ENCODE measurements at regions of chr1 and their contacts with region 1.

Region 1: DNA sequence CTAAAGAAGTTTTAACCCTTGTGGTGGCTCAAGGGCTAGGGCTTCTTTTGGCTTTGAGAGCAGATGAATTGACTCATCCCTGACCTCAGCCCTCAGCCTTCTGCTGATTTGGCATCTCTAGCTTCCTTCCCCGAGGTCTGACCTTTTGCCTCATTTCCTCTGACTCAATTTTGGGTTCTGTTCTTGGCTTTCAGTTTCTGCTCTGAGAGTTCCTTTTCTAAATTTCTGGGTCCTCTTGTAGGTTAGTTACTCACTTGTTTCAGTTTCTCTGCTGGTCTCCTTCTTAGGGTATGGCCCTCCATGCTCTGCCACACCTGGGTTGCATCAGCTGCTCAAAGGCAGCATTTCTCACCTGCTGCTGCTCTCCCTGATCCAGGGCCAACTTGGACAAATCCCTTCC is 19.4 kb downstream of the PDE4B start:
- DNase-seq: no peak
- H3K4me3 ChIP-seq: no peak overlapping the region
- H3K27ac ChIP-seq: peak overlapping the region in 2 of 4 donors; percentile 35 to 39
- H3K4me1 ChIP-seq: peaks cover 0 to 6% (median 0%) of the 10 kb centered on the region in 3 donors
- H3K27me3 ChIP-seq: no peaks in the 10 kb centered on the region
- CTCF ChIP-seq: no peak
- POLR2A ChIP-seq: no peak

Region 2: GRCh38 chr1:65493802-65494201 is 318.3 kb before region 1 on chr1:
- intact Hi-C with region 1: no loop called
- DNase-seq: no peak
- H3K4me3 ChIP-seq: no peak overlapping the region
- H3K27ac ChIP-seq: peak overlapping the region in 1 of 4 donors; percentile 55
- H3K4me1 ChIP-seq: no peaks in the 10 kb centered on the region
- H3K27me3 ChIP-seq: no peaks in the 10 kb centered on the region
- CTCF ChIP-seq: no peak
- POLR2A ChIP-seq: no peak

Region 3: DNA sequence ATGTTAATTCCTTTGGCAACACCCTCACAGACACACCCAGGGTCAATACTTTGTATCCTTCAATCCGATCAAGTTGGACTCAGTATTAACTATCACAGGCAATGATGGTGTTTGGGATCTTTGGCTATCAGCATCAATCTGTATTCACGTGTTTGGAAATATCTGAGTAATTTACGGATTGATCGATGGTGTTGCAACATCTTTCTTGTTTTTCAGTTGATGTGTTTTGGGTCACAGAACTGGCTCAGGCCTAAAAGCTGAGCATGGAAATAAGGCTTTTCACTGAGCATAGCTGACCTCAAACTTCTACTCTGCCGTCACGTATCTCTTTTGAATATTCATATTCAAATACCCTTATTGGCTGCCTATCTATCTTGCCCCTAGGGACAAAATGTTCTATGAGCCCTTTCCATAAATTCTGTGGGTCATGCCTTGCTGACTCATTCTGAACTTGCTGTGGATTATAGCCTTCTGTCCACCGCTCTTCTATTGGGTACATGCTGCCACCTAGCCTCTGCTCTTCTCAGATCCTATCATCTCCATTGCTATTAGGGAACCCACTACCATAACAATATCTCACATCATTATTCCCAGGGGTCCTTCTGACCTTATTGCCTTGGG is 136.7 kb after region 1 on chr1:
- intact Hi-C with region 1: no loop called
- DNase-seq: no peak
- H3K4me3 ChIP-seq: no peak overlapping the region
- H3K27ac ChIP-seq: peak overlapping the region in 2 of 4 donors; percentile 24 to 38
- H3K4me1 ChIP-seq: no peaks in the 10 kb centered on the region
- H3K27me3 ChIP-seq: no peaks in the 10 kb centered on the region
- CTCF ChIP-seq: no peak
- POLR2A ChIP-seq: no peak

Region 4: DNA sequence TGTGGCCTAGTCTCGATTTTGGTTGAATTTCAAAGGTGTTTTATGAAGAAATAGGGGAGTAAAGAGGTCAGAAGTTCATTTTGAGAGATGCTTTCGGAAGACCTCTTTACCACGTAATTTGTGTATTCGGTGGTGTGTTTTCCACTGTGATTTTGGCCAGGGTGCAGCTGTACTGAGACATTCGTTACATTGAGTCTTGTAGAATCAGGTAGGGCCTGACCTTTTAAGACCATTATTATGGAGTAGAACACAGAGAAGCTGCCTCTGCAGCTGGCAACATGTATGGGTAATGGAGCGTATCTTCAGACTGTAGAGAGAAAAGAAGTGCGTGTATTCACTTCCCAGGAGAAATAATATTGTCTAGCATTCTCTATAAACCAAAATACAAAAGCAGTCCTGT is 307.1 kb after region 1 on chr1:
- intact Hi-C with region 1: no loop called
- DNase-seq: no peak
- H3K4me3 ChIP-seq: no peak overlapping the region
- H3K27ac ChIP-seq: no peak overlapping the region
- H3K4me1 ChIP-seq: no peaks in the 10 kb centered on the region
- H3K27me3 ChIP-seq: no peaks in the 10 kb centered on the region
- CTCF ChIP-seq: no peak
- POLR2A ChIP-seq: no peak

Region 5: DNA sequence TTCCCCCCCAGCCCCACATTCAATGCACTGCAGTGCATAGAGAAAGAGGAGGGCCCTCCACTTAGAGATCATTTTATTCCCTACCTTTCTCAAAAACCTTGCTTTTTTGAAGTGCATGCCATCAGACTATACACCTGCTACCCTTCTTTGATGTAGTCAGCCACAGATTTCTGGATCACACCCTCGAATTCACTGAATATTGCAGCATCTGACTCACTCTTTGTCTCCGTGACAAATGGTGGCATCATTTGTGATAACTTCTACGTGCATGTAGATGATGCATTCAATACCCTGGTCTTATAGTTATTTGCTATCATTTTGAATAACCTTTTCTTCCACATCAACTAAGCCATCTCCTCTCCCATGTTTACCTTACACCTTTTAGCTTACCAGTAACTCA is 411.6 kb after region 1 on chr1:
- intact Hi-C with region 1: loop called (anchors 5 kb)
- DNase-seq: no peak
- H3K4me3 ChIP-seq: no peak overlapping the region
- H3K27ac ChIP-seq: no peak overlapping the region
- H3K4me1 ChIP-seq: no peaks in the 10 kb centered on the region
- H3K27me3 ChIP-seq: peaks cover 0 to 3% (median 0%) of the 10 kb centered on the region in 4 donors
- CTCF ChIP-seq: no peak
- POLR2A ChIP-seq: no peak